ENCODE measurements at regions of chr10 and their contacts with region 1.

Region 1: GRCh38 chr10:122112625-122113160 is 123.7 kb downstream of the TACC2 start:
- DNase-seq: peak; percentile 90
- ATAC-seq: peak; percentile 93

Region 2: GRCh38 chr10:121927841-121928527 is 184.7 kb before region 1 on chr10 and contains the start of gene ATE1:
- intact Hi-C with region 1: loop called (anchors 5 kb)
- DNase-seq: peak; percentile 94
- ATAC-seq: peak; percentile 98
- total RNA-seq, gene ATE1: 31.5 TPM

Region 3: DNA sequence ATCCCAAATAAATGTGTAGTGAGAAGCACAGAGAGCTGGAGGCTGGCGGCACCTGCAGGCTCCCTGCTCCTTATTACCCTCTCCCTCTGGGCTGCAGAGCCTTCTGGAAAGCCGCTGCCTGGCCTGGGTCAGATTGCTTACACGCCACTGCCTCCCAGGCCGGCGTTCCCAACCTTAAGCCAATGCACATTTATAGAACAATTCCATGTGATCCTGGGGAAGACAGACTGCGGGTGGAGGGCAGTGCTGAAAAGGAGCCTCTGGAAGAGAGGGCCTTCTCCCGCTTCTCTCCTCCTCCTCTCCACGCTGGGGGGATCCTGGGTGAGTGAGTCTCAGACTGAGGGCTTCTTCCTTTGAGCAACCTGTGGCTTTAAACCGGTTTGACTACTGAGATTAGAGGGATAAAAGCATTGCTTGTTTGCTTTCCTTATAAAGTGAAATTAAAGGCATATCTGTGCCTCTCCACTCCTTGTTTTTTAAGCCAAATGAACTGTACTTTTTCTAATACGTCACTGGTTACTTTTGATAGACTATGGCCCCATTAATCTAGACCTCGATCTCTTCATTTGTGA is 118.2 kb before region 1 on chr10:
- intact Hi-C with region 1: loop called (anchors 10 kb)
- DNase-seq: no peak
- ATAC-seq: peak; percentile 79

Region 4: GRCh38 chr10:122051251-122051996 is 61.3 kb before region 1 on chr10:
- intact Hi-C with region 1: loop called (anchors 1 kb)
- DNase-seq: no peak
- ATAC-seq: peak; percentile 26

Region 5: DNA sequence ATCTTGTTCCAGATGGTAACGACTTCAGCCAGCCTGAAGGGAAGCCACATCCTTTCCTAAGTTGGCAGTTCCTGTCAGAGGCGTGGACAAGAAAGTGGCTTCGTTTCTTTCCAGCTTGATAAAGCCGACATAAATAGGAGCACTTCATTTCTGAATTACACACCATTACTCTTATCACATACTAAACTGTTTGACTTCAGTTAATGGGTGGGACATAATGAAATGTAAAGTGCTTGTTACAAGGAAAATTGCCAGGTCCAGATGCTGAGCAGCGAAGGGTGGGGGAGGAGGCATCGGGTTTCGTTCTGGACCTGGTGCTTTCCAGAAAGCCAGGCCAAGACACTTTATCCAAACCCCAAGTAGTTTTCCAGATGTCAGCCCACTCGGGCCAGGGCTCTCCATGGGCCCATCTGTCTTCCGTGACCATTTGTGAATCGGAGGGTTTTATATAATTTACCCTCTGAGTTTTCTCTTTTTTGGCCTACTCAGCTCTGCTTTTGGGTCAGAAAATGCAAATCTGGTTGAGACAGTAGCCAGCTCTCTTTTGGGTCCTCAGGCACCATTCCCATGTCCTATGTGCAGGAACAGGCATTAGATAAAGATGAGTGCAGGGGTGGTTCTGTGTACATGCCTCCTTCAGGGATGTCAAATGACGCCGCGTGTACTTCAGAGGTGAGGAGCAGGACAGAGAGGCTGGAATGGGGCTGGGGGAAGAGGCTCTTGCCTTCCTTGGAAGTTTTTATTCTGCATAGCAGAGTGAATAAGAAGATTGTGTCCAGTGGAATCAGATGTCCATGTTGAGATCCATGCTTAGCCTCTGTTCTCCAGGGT is 33.5 kb before region 1 on chr10:
- intact Hi-C with region 1: loop called (anchors 2 kb)
- DNase-seq: no peak
- ATAC-seq: peak; percentile 69

Region 6: GRCh38 chr10:122142641-122143237 is 30.0 kb after region 1 on chr10:
- intact Hi-C with region 1: loop called (anchors 1 kb)
- DNase-seq: no peak
- ATAC-seq: no peak

Region 7: GRCh38 chr10:122154545-122155366 is 42.1 kb after region 1 on chr10:
- intact Hi-C with region 1: no loop called
- DNase-seq: no peak
- ATAC-seq: no peak

Region 8: GRCh38 chr10:122388287-122388997 is 275.7 kb after region 1 on chr10:
- intact Hi-C with region 1: no loop called
- DNase-seq: no peak
- ATAC-seq: no peak

Region 9: GRCh38 chr10:122541541-122542002 is 428.9 kb after region 1 on chr10:
- intact Hi-C with region 1: no loop called
- DNase-seq: no peak
- ATAC-seq: no peak

Measured in Right ventricle myocardium inferior (tissue), 1 donor.